PC-9 (cell line): ENCODE measurements at regions of chr20 and their contacts with region 1.

Region 1: DNA sequence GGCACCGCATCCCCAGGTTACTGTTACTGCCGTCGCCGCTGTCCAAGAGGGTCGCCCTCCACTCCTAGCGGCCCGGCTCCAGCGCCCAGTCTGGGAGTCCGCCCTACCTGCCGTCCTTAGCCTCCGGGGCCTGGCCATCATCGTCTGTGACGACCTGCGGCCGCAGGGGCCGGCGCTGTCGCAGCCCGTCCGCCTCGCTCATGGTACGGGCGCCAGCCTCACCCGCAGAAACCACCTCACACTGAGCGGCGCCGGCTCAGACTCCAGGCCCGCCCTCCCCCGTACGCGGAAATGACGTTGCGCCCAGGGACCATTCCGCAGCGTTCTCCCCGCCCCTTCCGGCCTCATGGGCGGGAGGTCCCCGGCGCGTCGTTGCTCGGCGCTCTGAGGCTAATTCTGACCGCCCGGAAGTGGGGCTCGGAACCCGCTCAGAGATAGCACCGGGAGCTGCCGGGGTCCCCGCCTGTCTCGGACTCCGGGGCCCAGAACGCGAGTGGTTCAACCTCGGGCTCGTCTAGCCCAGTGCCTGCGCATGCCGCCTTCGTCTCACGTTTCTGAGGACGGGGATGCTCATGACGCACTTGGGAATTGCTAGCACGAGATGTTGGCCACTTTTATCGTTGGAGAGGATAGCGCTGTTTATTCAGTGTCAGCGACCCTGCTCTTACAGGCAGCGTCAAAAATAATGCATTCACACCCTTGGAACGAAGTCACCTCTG is at the start of gene APMAP:
- DNase-seq: peak; percentile 75 to 93
- H3K4me3 ChIP-seq: peak within 1 kb of the TSS; percentile 71
- H3K27ac ChIP-seq: peak within 1 kb of the TSS; percentile 54
- H3K4me1 ChIP-seq: peaks cover 49% of the 10 kb centered on the region
- H3K27me3 ChIP-seq: no peaks in the 10 kb centered on the region
- CTCF ChIP-seq: no peak
- total RNA-seq, gene APMAP: 96.6 and 103 TPM in 2 replicates

Region 2: DNA sequence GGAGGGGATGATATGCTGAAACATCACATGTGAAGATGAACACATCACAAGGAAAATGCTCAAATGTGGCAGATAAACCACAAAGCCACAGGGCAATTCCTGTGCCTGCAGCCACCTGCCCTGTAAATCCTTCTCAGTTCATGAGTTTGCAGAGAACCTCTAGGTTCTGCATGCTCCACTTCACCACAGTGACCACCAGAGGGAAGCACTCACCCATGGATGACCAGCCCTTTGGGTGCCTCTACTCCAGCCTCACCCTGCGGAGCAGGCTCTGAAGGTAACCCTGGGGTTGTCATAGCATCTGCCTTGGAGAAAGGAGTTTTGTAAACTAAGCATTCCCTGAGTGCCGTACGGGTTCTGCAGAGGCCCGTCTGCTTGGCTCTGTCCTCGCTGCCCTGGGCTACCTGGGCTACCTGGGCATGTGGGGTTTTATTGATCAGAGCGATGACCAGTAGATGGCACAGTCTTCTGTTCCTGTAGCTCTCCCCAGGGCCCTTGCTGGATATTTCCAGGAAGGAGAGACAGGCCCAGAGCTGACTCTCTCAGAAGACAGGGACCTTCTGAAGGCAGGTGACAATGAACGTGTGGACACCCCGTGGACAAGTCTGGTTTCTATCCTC is 1210.2 kb before region 1 on chr20:
- CTCF ChIA-PET with region 1: no interaction called
- POLR2A ChIA-PET with region 1: no interaction called
- intact Hi-C with region 1: loop called (anchors 5 kb)
- DNase-seq: peak; percentile 36 to 61
- H3K4me3 ChIP-seq: no peak overlapping the region
- H3K27ac ChIP-seq: no peak overlapping the region
- H3K4me1 ChIP-seq: no peaks in the 10 kb centered on the region
- H3K27me3 ChIP-seq: no peaks in the 10 kb centered on the region
- CTCF ChIP-seq: peak; percentile 73

Region 3: DNA sequence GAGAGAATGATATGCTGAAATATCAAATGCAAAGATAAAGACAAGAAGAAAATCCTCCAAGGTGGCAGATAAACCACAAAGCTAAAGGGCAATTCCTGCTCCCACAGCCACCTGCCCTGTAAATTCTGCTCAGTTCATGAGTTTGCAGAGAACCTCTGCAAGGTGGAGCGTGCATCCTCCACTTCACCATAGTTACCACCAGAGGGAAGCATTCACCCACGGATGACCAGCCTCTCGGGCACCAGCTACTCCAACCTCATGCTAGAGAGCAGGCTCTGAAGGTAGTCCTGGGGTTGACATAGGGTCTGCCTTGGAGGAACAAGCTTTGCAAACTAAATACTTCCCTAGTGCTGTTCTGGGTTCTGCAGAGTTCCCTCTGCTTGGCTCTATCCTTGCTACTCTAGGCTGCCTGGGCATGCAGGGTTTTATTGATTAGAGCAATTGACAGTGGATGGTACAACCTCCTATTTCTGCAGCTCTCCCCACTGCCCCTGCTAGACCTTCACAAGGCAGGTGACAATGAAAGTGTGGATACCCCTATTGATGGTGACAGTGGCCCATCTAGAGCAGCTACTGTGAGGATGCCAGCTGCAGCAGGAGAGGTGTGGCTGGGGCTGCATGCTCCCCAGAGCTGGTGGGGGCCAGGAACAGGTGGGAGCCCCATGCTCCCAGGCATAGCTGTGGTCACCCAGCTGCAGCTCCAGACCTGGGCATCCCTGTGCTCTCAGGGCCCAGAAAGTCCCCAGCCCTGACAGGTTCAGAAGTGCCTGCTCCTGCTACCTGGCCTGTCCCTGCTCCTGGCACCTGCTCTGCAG is 1055.1 kb before region 1 on chr20:
- CTCF ChIA-PET with region 1: no interaction called
- POLR2A ChIA-PET with region 1: no interaction called
- intact Hi-C with region 1: loop called (anchors 2 kb)
- DNase-seq: peak; percentile 60 to 75
- H3K4me3 ChIP-seq: no peak overlapping the region
- H3K27ac ChIP-seq: no peak overlapping the region
- H3K4me1 ChIP-seq: no peaks in the 10 kb centered on the region
- H3K27me3 ChIP-seq: no peaks in the 10 kb centered on the region
- CTCF ChIP-seq: peak; percentile 92

Region 4: DNA sequence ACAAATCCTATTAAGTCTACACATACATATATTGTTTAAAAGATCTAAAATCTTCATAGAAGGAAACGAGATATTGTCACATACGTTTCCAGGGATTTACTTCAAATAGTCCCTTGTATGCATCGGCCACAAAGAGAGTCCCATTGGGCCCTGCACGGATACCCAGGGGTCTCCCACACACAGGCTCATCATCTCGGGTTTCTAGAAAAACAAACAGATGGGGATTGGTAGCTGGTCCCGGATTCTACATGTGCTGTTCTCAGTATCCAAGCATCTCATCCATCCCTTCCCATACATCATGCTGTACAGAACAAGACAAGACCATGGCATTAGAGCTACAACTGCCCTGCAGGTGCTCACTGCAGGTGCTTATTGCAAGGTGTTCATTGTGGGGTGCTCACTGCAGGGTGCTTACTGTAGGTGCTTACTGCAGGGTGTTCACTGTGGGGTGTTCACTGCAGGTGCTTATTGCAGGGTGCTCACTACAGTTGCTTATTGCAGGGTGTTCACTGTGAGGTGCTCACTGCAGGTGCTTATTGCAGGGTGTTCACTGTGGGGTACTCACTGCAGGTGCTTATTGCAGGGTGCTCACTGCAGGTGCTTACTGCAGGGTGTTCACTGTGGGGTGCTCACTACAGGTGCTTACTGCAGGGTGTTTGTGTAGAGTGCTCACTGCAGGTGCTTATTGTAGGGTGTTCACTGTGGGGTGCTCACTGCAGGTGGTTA is 21.1 kb before region 1 on chr20:
- CTCF ChIA-PET with region 1: no interaction called
- POLR2A ChIA-PET with region 1: no interaction called
- intact Hi-C with region 1: no loop called
- DNase-seq: no peak
- H3K4me3 ChIP-seq: no peak overlapping the region
- H3K27ac ChIP-seq: no peak overlapping the region
- H3K4me1 ChIP-seq: no peaks in the 10 kb centered on the region
- H3K27me3 ChIP-seq: no peaks in the 10 kb centered on the region
- CTCF ChIP-seq: no peak

Region 5: GRCh38 chr20:25065625-25066338 is 73.1 kb after region 1 on chr20:
- CTCF ChIA-PET with region 1: interaction called, 5 read pairs
- POLR2A ChIA-PET with region 1: no interaction called
- intact Hi-C with region 1: loop called (anchors 1 kb)
- DNase-seq: peak; percentile 68 to 76
- H3K4me3 ChIP-seq: no peak overlapping the region
- H3K27ac ChIP-seq: no peak overlapping the region
- H3K4me1 ChIP-seq: peaks cover 24% of the 10 kb centered on the region
- H3K27me3 ChIP-seq: no peaks in the 10 kb centered on the region
- CTCF ChIP-seq: peak; percentile 83

Region 6: GRCh38 chr20:25254986-25255680 is 262.5 kb after region 1 on chr20:
- CTCF ChIA-PET with region 1: no interaction called
- POLR2A ChIA-PET with region 1: no interaction called
- intact Hi-C with region 1: loop called (anchors 2 kb)
- DNase-seq: peak in 1 of 2 experiments; percentile 89
- H3K4me3 ChIP-seq: no peak overlapping the region; the same call in 1 of the 2 replicates
- H3K27ac ChIP-seq: peak overlapping the region; percentile 86; the same call in 1 of the 2 replicates
- H3K4me1 ChIP-seq: peaks cover 65% of the 10 kb centered on the region
- H3K27me3 ChIP-seq: no peaks in the 10 kb centered on the region
- CTCF ChIP-seq: no peak

Region 7: DNA sequence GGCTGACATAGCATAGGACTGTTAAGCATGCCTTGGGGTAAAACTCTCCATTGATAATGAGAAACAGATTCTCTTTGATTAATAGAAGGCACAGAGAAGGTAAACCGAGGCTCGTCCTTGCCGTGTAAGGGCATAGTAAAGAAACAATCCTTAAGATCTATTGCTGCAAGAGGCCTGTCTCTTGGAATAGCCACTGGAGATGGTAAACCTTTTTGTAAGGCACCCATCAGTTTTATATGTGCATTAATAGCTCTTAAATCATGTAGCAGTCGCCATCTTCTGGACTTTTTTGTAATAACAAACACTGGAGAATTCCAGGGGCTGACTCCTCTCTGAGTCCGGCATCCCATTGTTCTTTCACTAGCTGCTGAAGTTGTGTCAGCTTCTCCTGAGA is 406.4 kb after region 1 on chr20:
- CTCF ChIA-PET with region 1: interaction called, 12 read pairs
- POLR2A ChIA-PET with region 1: interaction called, 3 read pairs
- intact Hi-C with region 1: loop called (anchors 1 kb)
- DNase-seq: peak; percentile 52 to 67
- H3K4me3 ChIP-seq: no peak overlapping the region
- H3K27ac ChIP-seq: no peak overlapping the region
- H3K4me1 ChIP-seq: peaks cover 25% of the 10 kb centered on the region
- H3K27me3 ChIP-seq: no peaks in the 10 kb centered on the region
- CTCF ChIP-seq: peak; percentile 65

Region 8: GRCh38 chr20:25532119-25532751 is 539.6 kb after region 1 on chr20:
- CTCF ChIA-PET with region 1: no interaction called
- POLR2A ChIA-PET with region 1: no interaction called
- intact Hi-C with region 1: no loop called
- DNase-seq: peak; percentile 45 to 56
- H3K4me3 ChIP-seq: no peak overlapping the region
- H3K27ac ChIP-seq: no peak overlapping the region
- H3K4me1 ChIP-seq: 0 out of 2 replicates have a peak, but pooled peaks cover 5% of the 10 kb centered on the region
- H3K27me3 ChIP-seq: no peaks in the 10 kb centered on the region
- CTCF ChIP-seq: no peak

Region 9: GRCh38 chr20:25696384-25697131 is 703.9 kb after region 1 on chr20 and contains the start of gene ZNF337:
- CTCF ChIA-PET with region 1: no interaction called
- POLR2A ChIA-PET with region 1: no interaction called
- intact Hi-C with region 1: loop called (anchors 10 kb)
- DNase-seq: peak; percentile 80 to 96
- H3K4me3 ChIP-seq: peak within 1 kb of the TSS; percentile 77
- H3K27ac ChIP-seq: peak within 1 kb of the TSS; percentile 49
- H3K4me1 ChIP-seq: peaks cover 7% of the 10 kb centered on the region; the same call in 1 of the 2 replicates
- H3K27me3 ChIP-seq: no peaks in the 10 kb centered on the region
- CTCF ChIP-seq: no peak
- total RNA-seq, gene ZNF337: 12.8 and 14.6 TPM in 2 replicates